ENCODE measurements at regions of chr2 and their contacts with region 1.

Region 1: GRCh38 chr2:75608684-75609333 is 37.8 kb upstream of the MRPL19 start:
- DNase-seq: no peak
- H3K4me3 ChIP-seq: no peak overlapping the region
- H3K27ac ChIP-seq: no peak overlapping the region
- H3K27me3 ChIP-seq: no peaks in the 10 kb centered on the region
- CTCF ChIP-seq: peak; percentile 99

Region 2: GRCh38 chr2:75476761-75477160 is 132.0 kb before region 1 on chr2:
- CTCF ChIA-PET with region 1: interaction called, 245 read pairs
- POLR2A ChIA-PET with region 1: no interaction called
- DNase-seq: no peak
- H3K4me3 ChIP-seq: no peak overlapping the region
- H3K27ac ChIP-seq: no peak overlapping the region
- H3K27me3 ChIP-seq: no peaks in the 10 kb centered on the region
- CTCF ChIP-seq: no peak

Region 3: DNA sequence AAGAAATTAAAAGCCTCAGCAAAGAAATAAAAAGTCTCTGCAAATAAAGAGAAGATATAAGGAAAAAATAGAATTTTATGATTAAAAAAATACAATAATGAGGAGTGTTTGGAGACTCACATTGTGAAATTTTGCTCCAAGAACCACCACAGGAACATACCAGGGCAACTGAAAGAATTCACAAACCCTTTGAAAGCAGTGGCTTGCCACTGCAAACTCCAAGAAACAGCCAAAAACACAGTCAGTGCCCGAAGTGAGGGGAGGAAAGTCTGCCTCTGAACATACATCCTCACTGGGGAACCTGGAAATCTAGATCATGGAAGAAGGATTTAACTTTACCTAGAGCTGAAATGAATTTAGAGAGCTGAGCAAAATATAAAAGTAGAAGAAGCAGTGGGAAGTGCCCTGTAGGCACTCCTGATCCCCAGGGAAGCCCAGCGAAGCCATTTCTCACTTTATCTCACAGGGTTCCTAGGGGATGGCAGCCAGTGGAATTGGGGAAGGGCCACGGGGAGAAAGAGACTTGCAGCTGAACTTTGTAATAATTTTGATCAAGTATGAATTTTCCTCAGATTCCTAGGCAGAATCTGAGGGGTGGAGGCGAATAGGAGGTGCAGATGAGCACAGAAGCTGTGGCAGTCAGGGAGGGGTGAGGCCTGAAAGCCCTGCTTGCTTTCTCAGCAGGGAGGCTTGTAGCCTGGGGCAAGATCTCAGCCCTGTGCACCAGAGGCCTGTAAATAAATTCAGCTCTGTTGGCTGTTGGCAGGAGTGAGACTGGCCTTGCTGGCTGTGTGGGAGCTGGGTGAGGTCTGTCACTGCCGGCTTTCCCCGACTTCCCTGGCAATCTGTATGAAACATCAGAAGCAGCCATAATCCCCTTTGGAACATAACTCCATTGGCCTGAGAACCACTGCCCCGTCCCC is 80.9 kb before region 1 on chr2:
- CTCF ChIA-PET with region 1: interaction called, 12 read pairs
- POLR2A ChIA-PET with region 1: no interaction called
- DNase-seq: no peak
- H3K4me3 ChIP-seq: no peak overlapping the region
- H3K27ac ChIP-seq: no peak overlapping the region
- H3K27me3 ChIP-seq: no peaks in the 10 kb centered on the region
- CTCF ChIP-seq: no peak

Region 4: DNA sequence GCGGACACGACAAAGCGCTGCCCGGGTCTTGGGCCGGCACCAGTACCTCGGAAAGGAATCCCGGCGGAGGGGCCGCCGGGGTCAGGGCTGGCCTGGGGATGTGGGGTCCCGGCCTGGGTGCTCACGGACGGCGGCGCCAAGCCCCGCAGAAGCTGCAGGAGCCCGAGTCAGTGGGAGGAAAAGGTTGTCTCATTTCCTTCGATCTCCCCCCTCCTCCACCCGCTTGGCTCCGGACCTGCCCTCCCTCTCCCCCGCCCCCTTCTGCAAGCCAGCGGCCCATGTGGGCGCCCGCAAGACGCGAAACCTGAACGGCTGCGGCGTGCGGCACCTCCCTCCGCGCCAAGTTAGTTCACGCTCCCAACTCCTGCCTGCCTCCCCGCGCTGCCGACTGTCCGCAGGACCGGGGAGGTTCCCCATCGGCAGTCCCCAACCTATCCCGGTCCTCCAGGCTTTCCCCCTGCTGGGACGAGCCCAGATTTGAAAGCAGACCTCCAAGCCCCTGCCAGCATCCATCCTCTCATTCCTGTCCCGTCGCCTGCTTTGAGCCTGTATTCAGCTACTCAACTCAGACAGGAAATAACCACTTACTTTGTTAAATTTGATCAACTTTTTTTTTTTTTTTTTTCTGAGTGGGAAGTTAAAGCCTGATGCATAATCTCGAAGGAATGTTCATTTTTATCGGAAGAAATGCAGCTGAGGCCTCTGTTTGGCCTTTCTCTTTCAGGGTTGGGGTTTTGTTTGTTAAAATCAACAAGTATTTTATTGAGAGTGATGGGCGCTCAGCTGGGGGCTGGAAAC is 47.8 kb before region 1 on chr2 and contains the start of gene EVA1A:
- CTCF ChIA-PET with region 1: interaction called, 53 read pairs
- POLR2A ChIA-PET with region 1: interaction called, 21 read pairs
- DNase-seq: peak; percentile 61
- H3K4me3 ChIP-seq: peak within 1 kb of the TSS; percentile 86
- H3K27ac ChIP-seq: peak within 1 kb of the TSS; percentile 97
- H3K27me3 ChIP-seq: no peaks in the 10 kb centered on the region
- CTCF ChIP-seq: no peak
- polyA plus RNA-seq, gene EVA1A: 22.8 and 32.5 TPM in 2 replicates

Region 5: GRCh38 chr2:75587954-75588587 is 20.7 kb before region 1 on chr2:
- CTCF ChIA-PET with region 1: interaction called, 43 read pairs
- POLR2A ChIA-PET with region 1: interaction called, 8 read pairs
- DNase-seq: peak; percentile 69
- H3K4me3 ChIP-seq: peak overlapping the region; percentile 35
- H3K27ac ChIP-seq: peak overlapping the region; percentile 54
- H3K27me3 ChIP-seq: no peaks in the 10 kb centered on the region
- CTCF ChIP-seq: no peak

Region 6: GRCh38 chr2:75619956-75620740 is 11.3 kb after region 1 on chr2:
- CTCF ChIA-PET with region 1: interaction called, 37 read pairs
- POLR2A ChIA-PET with region 1: no interaction called
- DNase-seq: no peak
- H3K4me3 ChIP-seq: no peak overlapping the region
- H3K27ac ChIP-seq: no peak overlapping the region
- H3K27me3 ChIP-seq: peaks cover 2% of the 10 kb centered on the region
- CTCF ChIP-seq: no peak

Region 7: DNA sequence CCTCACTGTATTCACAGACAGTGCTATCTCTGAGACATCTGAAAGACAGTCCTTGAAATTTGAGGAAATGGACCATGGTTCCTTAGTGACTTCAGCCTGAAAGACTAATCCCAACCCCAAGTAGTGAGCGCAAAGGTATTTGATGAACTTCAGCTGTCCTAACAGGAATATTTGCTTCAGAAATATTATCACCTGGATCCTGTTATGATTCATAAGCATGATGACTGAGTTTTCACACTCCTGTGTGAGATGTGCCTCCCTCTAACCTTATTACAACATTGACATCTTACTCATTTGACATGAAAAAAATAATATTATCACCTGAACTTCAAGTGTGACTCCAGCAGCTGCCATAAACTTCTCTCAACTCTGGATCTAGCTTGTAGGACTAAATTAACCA is 26.1 kb after region 1 on chr2:
- CTCF ChIA-PET with region 1: interaction called, 14 read pairs
- POLR2A ChIA-PET with region 1: no interaction called
- DNase-seq: no peak
- H3K4me3 ChIP-seq: no peak overlapping the region
- H3K27ac ChIP-seq: no peak overlapping the region
- H3K27me3 ChIP-seq: peaks cover 14% of the 10 kb centered on the region
- CTCF ChIP-seq: no peak

Region 8: GRCh38 chr2:75729861-75730260 is 121.1 kb after region 1 on chr2:
- CTCF ChIA-PET with region 1: no interaction called
- POLR2A ChIA-PET with region 1: no interaction called
- DNase-seq: no peak
- H3K4me3 ChIP-seq: no peak overlapping the region
- H3K27ac ChIP-seq: no peak overlapping the region
- H3K27me3 ChIP-seq: no peaks in the 10 kb centered on the region
- CTCF ChIP-seq: peak; percentile 33

Region 9: DNA sequence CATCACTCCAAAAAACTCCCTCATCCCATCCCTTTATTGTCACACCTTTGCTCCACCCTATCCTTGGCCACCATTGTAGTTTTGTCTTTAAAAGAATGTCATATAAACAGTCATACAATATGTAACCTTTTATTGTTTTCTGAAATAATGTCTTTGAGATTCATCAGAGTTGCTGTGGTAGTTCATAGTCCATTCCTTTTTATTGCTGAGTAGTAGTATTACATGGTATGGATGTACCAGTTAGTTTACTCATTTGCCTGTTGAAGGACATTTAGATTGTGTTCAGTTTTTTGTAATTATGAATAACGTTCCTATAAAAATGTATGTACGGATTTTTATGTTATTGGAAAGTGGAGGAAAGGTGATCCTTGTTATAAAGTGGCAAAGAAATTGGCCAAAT is 273.7 kb after region 1 on chr2:
- CTCF ChIA-PET with region 1: no interaction called
- POLR2A ChIA-PET with region 1: no interaction called
- DNase-seq: no peak
- H3K4me3 ChIP-seq: no peak overlapping the region
- H3K27ac ChIP-seq: no peak overlapping the region
- H3K27me3 ChIP-seq: no peaks in the 10 kb centered on the region
- CTCF ChIP-seq: no peak